Activated CD4-positive, alpha-beta memory T cell treated with anti-CD3 and anti-CD28 coated beads for 36 hours (primary cell): ENCODE measurements at regions of chr12 and their contacts with region 1.

Region 1: GRCh38 chr12:50542448-50542847 is 37.7 kb downstream of the DIP2B start:
- DNase-seq: peak; percentile 41
- H3K4me3 Mint-ChIP-seq: no peak overlapping the region
- H3K27ac Mint-ChIP-seq: peak overlapping the region; percentile 87
- H3K4me1 Mint-ChIP-seq: peaks cover 48% of the 10 kb centered on the region
- H3K27me3 Mint-ChIP-seq: no peaks in the 10 kb centered on the region

Region 2: DNA sequence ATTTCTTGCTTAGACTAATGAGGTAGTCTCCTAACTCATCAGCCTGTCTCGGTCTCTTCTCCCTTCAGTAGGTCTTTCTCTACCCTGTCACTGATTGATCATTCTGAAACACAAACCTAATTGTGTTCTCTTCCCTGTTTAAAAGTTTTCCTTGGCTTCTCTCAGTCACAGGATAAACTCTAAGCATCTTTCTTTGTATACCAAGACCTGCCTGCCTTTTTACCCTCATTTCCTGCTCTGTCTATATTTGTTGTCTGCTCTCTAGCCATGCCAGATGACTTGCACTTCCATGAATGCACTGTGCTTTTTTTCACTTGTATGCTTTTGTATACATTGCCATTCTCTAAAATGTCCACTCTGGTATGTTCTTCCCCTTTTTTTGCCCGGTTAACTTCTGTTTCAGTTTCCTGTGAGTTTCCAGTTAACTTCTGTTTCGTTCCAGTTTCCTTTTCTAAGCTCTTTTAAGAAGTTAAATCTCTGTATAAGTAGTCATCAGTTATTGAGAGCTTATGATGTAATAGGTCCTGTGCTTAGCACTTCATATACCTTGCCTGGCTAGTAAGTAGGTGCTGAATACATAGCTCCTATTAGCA is 24.9 kb before region 1 on chr12:
- CTCF ChIA-PET with region 1: interaction called, 3 read pairs
- POLR2A ChIA-PET with region 1: interaction called, 4 read pairs
- intact Hi-C with region 1: loop called (anchors 1 kb)
- DNase-seq: no peak
- H3K4me3 Mint-ChIP-seq: no peak overlapping the region
- H3K27ac Mint-ChIP-seq: no peak overlapping the region
- H3K4me1 Mint-ChIP-seq: peaks cover 53% of the 10 kb centered on the region
- H3K27me3 Mint-ChIP-seq: no peaks in the 10 kb centered on the region

Region 3: DNA sequence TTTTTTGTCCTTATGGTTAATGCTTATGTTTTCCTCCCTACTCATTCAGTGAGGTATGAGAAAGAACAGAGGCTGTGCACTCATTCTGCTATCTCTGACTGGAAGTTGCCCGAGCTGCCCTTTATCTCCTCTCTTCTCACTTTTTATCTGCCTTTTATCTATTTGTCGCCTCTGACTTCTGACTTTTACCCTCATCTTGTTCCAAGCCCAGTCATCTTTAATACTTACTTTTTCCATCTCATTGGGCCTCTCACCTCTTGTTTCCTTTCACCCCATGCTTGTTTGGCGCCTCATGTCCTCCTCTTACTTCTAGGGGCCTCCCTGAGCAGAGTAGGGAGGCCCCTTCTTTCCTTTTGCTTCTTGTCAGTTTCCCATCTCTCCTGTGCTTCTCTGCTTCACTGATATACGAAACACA is 13.0 kb after region 1 on chr12:
- CTCF ChIA-PET with region 1: no interaction called
- POLR2A ChIA-PET with region 1: interaction called, 21 read pairs
- intact Hi-C with region 1: loop called (anchors 1 kb)
- DNase-seq: peak; percentile 66
- H3K4me3 Mint-ChIP-seq: peak overlapping the region; percentile 58
- H3K27ac Mint-ChIP-seq: peak overlapping the region; percentile 94
- H3K4me1 Mint-ChIP-seq: peaks cover 53% of the 10 kb centered on the region
- H3K27me3 Mint-ChIP-seq: no peaks in the 10 kb centered on the region

Region 4: GRCh38 chr12:50603817-50604639 is 61.6 kb after region 1 on chr12:
- CTCF ChIA-PET with region 1: no interaction called
- POLR2A ChIA-PET with region 1: no interaction called
- intact Hi-C with region 1: no loop called
- DNase-seq: no peak
- H3K4me3 Mint-ChIP-seq: no peak overlapping the region
- H3K27ac Mint-ChIP-seq: no peak overlapping the region
- H3K4me1 Mint-ChIP-seq: peaks cover 24% of the 10 kb centered on the region
- H3K27me3 Mint-ChIP-seq: no peaks in the 10 kb centered on the region